CD4-positive, alpha-beta T cell (primary cell): ENCODE measurements at regions of chr12 and their contacts with region 1.

Region 1: DNA sequence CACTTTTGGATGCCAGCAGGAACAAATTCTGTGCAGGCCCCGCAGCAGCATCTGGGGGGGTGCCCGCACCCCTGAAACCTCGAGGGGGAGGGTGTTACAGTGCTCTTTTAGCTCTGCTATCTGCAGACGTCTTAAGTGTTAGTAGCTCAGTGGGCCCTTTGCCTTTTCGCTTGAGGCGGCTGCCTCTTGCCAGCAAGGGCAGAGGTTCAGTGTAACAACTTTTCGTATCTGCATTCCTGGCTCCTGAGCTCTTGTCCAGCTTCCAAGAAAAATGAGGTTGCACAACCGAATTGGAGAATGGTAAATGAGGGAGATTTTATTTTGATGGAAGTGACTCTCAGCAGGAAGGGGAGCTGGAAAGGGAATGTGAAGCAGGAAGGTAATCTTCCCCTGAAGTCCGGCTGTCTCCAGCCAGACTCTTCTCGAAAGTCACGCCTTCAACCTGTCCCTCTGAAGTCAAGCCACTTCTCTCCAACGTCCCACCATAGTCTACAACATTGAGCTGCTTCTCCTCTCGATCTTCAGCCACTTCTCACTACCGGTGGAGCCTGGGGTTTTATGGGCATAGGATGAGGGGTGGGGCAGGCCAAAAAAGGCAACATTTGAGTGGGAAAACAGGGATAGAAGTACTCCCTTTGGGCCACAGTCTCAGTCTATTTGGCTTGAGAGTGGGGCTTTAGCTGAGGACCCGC is 17.8 kb downstream of the TAS2R50 start:
- DNase-seq: no peak
- ATAC-seq: no peak
- H3K4me3 ChIP-seq: no peak overlapping the region
- H3K4me3 Mint-ChIP-seq: no peak overlapping the region
- H3K27ac ChIP-seq: no peak overlapping the region
- H3K27ac Mint-ChIP-seq: no peak overlapping the region
- H3K4me1 ChIP-seq: no peaks in the 10 kb centered on the region
- H3K4me1 Mint-ChIP-seq: peaks cover 10% of the 10 kb centered on the region
- H3K27me3 ChIP-seq: no peaks in the 10 kb centered on the region
- H3K27me3 Mint-ChIP-seq: no peaks in the 10 kb centered on the region
- CTCF ChIP-seq: no peak

Region 2: DNA sequence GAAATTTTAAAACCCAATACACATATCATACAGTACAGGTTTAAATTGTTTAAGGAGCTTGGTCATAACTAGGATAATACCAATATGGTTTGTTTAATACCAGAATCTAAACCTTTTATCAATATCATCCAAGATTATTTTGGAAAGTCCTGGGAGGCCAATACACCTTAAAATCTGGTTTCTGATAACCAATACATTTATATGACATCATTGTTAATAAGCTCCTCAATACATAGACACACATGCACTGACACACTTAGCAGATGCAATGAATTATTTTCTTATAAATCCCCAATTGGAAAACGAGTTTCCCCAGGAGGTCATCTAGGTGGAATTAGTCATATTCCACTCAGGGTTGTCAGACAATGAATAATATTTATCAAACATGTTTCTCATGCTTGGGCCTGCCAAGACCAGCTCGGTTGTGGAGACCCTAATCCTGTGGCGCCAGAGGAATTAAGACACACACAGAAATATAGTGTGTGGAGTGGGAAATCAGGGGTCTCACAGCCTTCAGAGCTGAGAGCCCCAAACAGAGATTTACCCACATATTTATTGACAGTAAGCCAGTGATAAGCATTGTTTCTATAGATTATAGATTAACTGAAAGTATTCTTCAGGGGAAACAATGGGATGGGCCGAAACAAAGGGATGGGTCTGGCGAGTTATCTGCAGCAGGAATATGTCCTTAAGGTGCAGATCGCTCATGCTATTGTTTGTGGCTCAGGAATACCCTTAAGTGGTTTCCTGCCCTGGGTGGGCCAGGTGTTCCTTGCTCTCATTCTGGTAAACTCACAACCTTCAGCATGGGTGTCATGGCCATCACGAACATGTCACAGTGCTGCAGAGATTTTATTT is 81.0 kb after region 1 on chr12:
- CTCF ChIA-PET with region 1: no interaction called
- POLR2A ChIA-PET with region 1: no interaction called
- intact Hi-C with region 1: no loop called
- DNase-seq: no peak
- ATAC-seq: no peak
- H3K4me3 ChIP-seq: no peak overlapping the region
- H3K4me3 Mint-ChIP-seq: no peak overlapping the region
- H3K27ac ChIP-seq: no peak overlapping the region
- H3K27ac Mint-ChIP-seq: no peak overlapping the region
- H3K4me1 ChIP-seq: no peaks in the 10 kb centered on the region
- H3K4me1 Mint-ChIP-seq: peaks cover 14% of the 10 kb centered on the region
- H3K27me3 ChIP-seq: no peaks in the 10 kb centered on the region
- H3K27me3 Mint-ChIP-seq: no peaks in the 10 kb centered on the region
- CTCF ChIP-seq: no peak

Region 3: GRCh38 chr12:11202811-11203210 is 233.9 kb after region 1 on chr12:
- CTCF ChIA-PET with region 1: no interaction called
- POLR2A ChIA-PET with region 1: no interaction called
- intact Hi-C with region 1: loop called in 1 of 2 experiments (anchors 10 kb)
- DNase-seq: no peak
- ATAC-seq: no peak
- H3K4me3 ChIP-seq: no peak overlapping the region
- H3K4me3 Mint-ChIP-seq: no peak overlapping the region
- H3K27ac ChIP-seq: no peak overlapping the region
- H3K27ac Mint-ChIP-seq: no peak overlapping the region
- H3K4me1 ChIP-seq: no peaks in the 10 kb centered on the region
- H3K4me1 Mint-ChIP-seq: no peaks in the 10 kb centered on the region
- H3K27me3 ChIP-seq: no peaks in the 10 kb centered on the region
- H3K27me3 Mint-ChIP-seq: no peaks in the 10 kb centered on the region
- CTCF ChIP-seq: no peak